Tibial artery (tissue), 4 donors: ENCODE measurements at regions of chr17 and their contacts with region 1.

Region 1: DNA sequence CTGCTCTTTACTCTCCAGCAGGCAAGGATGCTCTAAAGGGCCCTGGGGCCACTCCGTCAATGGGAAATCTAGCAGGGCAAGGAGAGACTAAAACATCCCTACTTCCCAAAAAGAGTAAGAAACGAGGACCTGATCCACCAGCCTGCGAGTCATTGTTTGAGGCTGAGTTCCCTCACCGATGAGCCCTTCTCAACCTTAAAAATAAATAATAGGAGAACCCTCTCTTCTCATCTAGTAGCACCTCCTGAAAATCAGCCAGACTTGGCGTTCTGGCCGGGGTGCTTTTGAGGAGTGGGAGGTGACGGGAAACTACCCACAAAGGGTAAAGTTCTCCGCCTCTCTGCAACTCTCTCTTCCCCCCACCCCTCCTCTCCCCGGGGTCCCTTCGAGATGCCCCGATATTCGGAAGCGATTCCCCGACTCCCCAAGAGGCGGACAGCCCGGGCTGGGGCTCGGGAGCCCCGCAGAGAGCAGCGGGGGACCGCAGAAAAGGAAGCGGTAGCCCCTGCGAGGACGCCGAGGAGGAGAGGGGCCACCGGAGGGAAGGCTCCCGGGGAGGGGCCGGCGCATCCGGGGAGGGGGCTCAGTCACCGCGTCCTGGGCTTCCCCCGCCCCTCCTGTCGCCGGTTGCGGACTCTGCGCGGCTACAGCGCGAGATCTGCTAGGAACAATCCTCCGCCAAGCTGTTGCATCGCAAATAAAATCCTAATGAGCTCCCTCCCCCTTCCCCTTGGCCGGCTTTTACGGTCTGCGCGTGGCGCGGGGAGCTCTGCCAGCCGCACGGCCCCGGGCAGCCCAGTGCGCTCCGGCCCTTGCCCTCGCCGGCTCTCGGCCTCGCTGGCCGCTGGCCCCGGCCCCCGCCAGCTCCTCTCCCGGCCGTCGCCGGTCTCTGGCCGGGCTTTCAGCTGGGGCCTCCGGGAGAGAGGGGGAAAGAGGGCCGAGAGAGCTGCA is 1.3 kb downstream of the HOXB9 start:
- DNase-seq: no peak
- H3K4me3 ChIP-seq: peak overlapping the region; percentile 27 to 42
- H3K27ac ChIP-seq: no peak overlapping the region
- H3K4me1 ChIP-seq: peaks cover 0 to 25% (median 21%) of the 10 kb centered on the region in 4 donors
- H3K27me3 ChIP-seq: peaks cover 0 to 99% of the 10 kb centered on the region in 2 donors
- CTCF ChIP-seq: no peak

Region 2: DNA sequence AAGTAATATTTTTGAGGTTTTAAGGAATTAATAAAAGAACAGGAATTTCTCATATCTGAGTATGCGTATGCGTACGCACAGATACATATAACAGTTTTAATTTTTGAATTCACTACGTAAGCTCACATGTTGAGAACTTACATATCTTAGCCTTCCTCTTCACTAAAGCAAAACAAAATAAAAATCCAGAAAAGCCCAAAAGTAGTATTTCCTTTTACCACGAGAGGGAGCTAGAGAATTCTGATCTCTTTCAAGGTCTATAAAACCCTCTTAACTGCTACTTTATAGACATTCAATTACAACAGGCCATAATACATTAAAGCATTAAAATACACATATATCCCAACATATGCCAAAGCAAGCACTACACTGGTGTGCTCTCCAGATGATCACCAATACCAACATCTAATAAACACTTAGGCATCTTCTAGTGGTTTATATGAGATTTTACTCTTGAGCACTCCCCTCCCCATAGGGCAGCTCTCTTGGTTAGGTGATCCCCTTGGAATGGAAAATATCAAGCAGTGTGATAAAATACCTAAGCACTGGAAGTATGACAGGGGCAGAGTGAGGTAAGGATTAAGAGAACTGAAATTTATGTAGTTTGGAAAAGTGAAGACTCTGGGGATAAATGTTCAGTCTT is 288.8 kb before region 1 on chr17:
- intact Hi-C with region 1: loop called (anchors 5 kb)
- DNase-seq: no peak
- H3K4me3 ChIP-seq: no peak overlapping the region
- H3K27ac ChIP-seq: no peak overlapping the region
- H3K4me1 ChIP-seq: no peaks in the 10 kb centered on the region
- H3K27me3 ChIP-seq: peaks cover 0 to 81% of the 10 kb centered on the region in 2 donors
- CTCF ChIP-seq: peak; percentile 74 to 77

Region 3: GRCh38 chr17:48492401-48493298 is 132.2 kb before region 1 on chr17:
- intact Hi-C with region 1: no loop called
- DNase-seq: peak in 1 of 2 donors; percentile 43
- H3K4me3 ChIP-seq: peak overlapping the region; percentile 15 to 26
- H3K27ac ChIP-seq: no peak overlapping the region
- H3K4me1 ChIP-seq: peaks cover 0 to 11% (median 8%) of the 10 kb centered on the region in 4 donors
- H3K27me3 ChIP-seq: peaks cover 0 to 59% of the 10 kb centered on the region in 2 donors
- CTCF ChIP-seq: peak; percentile 87 to 93